PC-9 (cell line): ENCODE measurements at regions of chr3 and their contacts with region 1.

Region 1: DNA sequence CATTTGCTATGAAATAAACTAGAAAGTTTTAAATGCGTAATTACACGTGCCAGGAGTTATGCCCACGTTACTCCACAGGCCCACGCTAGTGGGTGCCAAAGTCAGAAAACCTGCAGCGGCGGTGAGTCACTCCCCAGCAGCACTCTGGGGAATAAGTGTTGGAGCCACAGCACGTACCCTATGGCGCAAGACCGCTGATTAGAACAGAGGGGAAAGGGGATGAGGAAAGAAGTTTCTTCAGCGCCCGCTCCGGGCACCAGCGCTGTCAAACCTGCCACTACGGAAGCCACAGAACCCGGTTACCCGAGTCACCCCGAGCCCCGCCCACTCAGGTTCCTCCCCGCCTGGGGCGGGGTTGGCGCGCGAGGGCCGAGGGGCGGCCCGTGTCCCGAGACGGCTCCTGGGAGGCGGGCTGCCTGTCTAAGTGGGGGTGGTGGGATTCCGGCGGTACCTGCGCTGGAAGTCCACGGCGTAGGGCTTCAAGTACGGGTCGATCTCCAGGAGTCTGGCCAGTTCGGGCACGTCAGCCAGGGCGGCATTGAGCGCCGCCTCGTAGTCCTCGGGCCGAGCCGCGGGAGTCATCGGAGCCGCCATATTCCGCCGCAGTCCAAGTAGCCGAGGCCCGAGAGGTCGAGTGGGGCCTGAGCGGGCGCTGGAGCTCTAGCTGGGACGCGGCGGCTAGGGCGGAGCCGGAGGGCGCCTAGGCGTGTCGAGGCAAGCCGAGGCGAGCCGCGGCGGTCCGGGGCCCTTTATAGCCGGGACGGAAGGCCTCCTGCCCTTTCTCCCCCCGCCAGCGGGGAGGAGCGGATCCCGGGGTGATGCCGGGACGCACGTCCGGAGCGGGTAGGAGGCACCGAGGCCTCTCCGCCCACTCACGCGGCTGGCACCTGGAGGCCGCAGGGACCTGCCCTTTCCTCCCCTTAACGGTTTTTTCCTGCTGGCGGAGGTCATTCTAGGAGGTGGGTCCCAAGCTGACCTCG is at the start of gene GBE1:
- DNase-seq: peak; percentile 95
- H3K4me3 ChIP-seq: peak within 1 kb of the TSS; percentile 63
- H3K27ac ChIP-seq: peak within 1 kb of the TSS; percentile 89
- H3K4me1 ChIP-seq: peaks cover 24% of the 10 kb centered on the region
- H3K27me3 ChIP-seq: no peaks in the 10 kb centered on the region
- CTCF ChIP-seq: peak; percentile 56; the same call in 1 of the 2 replicates
- total RNA-seq, gene GBE1: 23.1 and 31.2 TPM in 2 replicates

Region 2: DNA sequence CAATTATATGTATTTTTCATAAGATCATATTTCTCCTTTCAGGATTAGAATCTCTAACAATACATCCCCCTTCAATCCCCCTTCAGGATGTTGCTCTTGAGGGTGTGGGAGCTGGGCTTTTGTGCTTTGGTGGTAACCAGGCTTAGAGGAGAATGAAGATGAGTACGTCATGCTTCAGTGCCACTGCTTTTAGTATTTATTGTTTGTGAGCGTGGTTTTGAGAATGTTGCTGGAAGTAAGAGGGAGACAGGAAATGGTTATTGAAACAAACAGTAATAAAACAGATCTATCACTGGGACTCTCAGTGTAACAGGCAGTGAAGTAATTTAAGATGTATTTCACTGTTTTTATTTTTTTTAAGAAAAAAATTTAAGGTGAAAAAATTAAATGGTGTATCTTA is 35.1 kb before region 1 on chr3:
- CTCF ChIA-PET with region 1: no interaction called
- POLR2A ChIA-PET with region 1: no interaction called
- intact Hi-C with region 1: loop called (anchors 2 kb)
- DNase-seq: no peak
- H3K4me3 ChIP-seq: no peak overlapping the region
- H3K27ac ChIP-seq: no peak overlapping the region
- H3K4me1 ChIP-seq: no peaks in the 10 kb centered on the region
- H3K27me3 ChIP-seq: no peaks in the 10 kb centered on the region
- CTCF ChIP-seq: no peak

Region 3: DNA sequence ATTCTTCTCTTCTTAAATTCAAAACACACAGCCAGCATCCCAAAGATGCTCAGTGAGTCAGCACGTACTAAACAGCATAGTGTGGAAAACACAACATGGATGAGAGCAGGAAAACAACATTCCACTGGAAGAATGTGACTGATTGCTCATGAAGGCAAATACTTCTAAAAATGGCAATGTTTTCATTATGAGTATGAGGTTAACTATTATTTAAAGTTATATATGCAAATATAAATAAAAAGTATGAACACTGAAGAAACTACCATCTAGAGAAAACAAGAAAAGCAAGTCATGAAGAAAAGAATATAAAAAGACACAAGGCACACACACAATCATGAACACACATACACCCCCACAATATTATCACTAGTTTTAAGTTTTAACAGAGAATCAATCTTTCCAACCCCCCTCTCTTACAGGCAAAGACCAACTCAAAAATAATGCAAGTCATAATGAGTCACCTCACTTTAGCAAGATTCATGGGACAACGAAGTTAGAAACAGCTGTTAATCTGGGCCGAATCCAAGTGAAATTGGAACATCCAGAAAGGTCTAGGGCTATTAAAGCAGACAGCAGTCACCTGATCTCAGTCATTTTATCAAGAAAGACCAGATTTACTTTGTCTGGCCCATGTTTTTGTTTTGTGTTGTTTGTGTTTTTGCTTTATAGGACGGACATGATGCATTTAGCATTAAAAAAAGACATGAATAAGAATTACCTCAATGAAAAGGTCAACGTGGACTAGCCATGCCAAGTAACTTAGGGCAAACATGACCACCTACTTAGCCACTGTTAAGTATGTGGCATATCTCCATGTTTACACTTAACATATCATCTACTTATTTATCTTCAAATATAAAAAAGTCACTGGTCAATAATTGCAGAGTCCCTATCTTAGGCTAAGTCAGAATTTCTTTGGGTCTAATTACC is 17.9 kb before region 1 on chr3:
- CTCF ChIA-PET with region 1: interaction called, 6 read pairs
- POLR2A ChIA-PET with region 1: interaction called, 3 read pairs
- intact Hi-C with region 1: loop called (anchors 2 kb)
- DNase-seq: peak in 1 of 2 experiments; percentile 78
- H3K4me3 ChIP-seq: no peak overlapping the region
- H3K27ac ChIP-seq: peak overlapping the region; percentile 92
- H3K4me1 ChIP-seq: peaks cover 37% of the 10 kb centered on the region
- H3K27me3 ChIP-seq: no peaks in the 10 kb centered on the region
- CTCF ChIP-seq: no peak